Heart left ventricle (tissue), 16 donors: ENCODE measurements at regions of chr5 and their contacts with region 1.

Region 1: DNA sequence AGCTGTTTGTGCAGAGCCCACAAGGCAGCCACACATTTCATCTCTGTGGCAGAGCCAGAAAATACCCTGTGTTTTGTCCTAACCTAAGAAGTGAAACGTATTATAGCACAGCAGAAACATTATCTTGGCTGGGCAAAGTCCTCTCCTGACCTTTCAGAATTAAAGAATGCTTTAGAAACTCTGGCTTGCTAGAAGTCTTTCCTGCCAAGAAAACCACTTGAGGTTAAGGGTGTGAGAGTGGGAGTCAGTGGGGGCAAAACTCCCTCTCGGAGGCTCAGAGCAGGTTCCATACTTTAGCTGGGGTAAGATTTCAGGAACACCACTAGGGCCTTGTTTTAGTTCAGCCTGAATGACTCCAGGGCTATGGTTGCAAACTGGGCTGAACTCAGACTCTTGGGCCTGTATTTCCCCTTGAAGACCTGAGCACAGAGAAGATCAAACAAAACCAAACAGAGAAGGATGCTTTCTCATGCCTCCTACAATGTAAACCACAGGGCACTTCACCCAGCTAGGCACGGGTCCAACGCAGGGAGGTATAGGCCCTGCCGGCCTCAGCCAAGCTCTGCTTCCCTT is 48.0 kb downstream of the ZNF366 start:
- DNase-seq: no peak
- ATAC-seq: no peak
- H3K4me3 ChIP-seq: no peak overlapping the region
- H3K27ac ChIP-seq: peak overlapping the region in 3 of 12 donors; percentile 3 to 47 (median 36)
- H3K4me1 ChIP-seq: peaks cover 5 to 61% (median 44%) of the 10 kb centered on the region in 12 donors
- H3K27me3 ChIP-seq: no peaks in the 10 kb centered on the region
- CTCF ChIP-seq: no peak
- POLR2A ChIP-seq: no peak

Region 2: DNA sequence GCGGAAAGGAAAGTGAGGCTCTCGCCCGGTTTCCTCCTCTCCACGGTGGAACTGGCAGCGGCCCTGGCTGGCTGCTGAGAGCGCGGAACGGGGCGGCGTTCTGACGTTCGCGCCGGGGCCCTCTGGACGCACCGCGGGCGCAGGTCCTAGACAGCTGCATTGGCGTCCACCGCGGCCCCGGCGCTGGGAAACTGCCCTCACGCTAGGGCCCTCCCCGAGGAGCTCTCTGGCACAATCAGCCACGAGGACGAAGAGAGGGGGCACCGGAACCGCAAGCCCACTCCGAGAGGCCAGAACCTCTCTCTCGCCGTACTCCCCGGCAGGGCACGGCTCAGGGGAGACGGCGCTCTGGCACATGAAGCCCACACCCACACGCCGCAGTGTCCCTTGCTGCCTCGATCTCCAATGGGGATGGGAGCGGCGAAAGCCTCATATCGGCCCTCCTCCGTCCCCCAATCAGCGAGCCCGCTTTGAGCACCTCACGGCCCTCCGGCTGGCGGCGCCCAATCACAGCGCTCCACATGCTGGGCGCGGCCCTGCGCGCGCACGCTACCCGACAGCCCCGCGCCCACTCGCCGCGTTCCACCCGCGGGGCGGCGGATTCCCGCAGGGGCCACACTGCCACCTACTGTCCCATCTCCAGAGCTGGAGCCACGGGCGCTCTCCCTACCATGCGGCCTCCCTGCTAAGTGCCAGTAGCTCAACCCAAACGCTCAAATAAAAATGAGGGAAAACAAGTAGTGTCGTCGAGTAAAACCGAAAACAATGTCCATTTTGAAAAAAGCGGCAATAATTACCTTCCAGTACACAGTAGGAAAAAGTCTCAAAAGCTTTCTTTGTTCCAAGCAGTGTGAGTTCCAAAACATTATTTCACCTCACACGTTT is 151.0 kb before region 1 on chr5:
- intact Hi-C with region 1: no loop called
- DNase-seq: peak; percentile 97 to 99 (median 99)
- ATAC-seq: peak; percentile 99
- H3K4me3 ChIP-seq: peak overlapping the region; percentile 55 to 87 (median 70)
- H3K27ac ChIP-seq: peak overlapping the region; percentile 81 to 99 (median 94)
- H3K4me1 ChIP-seq: peaks cover 0 to 32% (median 7%) of the 10 kb centered on the region in 12 donors
- H3K27me3 ChIP-seq: no peaks in the 10 kb centered on the region
- CTCF ChIP-seq: peak; percentile 86 to 97 (median 93)
- POLR2A ChIP-seq: peak; percentile 83 to 98

Region 3: DNA sequence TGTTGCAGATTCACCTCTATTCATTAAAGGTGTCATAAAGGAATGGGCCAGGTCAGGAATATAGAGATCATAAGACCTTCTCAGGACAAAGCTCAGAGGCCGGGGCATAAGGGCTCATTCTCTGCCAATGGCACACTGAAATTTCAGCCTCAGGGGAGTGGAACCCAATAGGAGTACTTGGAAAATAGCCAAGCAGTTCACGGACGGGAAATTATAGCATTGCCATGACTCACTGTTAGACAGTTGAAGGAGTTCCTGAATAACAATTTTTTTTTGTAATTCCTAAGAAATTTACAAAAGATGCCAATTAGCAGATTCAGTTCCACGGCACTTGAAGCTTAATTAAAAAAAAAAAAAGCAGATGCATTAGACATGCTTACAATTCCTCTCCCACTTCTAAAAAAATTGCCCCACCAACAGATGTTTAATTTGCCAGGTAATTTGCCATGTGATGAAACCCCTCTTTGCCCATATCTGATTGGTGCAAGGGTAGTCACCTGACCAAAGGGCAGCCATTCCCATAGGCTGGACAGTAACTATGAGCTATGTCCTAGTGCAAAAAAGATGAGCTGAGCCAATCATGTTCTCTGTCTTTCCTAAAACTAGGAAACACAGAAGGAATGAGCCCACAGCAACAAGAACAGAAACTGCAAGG is 80.4 kb before region 1 on chr5:
- intact Hi-C with region 1: loop called in 1 of 10 experiments (anchors 5 kb)
- DNase-seq: peak in 3 of 5 donors; percentile 24 to 44 (median 38)
- ATAC-seq: peak; percentile 39 to 76 (median 61)
- H3K4me3 ChIP-seq: no peak overlapping the region
- H3K27ac ChIP-seq: peak overlapping the region in 7 of 12 donors; percentile 4 to 40 (median 32)
- H3K4me1 ChIP-seq: peaks cover 0 to 44% (median 13%) of the 10 kb centered on the region in 12 donors
- H3K27me3 ChIP-seq: no peaks in the 10 kb centered on the region
- CTCF ChIP-seq: no peak
- POLR2A ChIP-seq: no peak